ENCODE measurements at regions of chr20 and their contacts with region 1.

Region 1: DNA sequence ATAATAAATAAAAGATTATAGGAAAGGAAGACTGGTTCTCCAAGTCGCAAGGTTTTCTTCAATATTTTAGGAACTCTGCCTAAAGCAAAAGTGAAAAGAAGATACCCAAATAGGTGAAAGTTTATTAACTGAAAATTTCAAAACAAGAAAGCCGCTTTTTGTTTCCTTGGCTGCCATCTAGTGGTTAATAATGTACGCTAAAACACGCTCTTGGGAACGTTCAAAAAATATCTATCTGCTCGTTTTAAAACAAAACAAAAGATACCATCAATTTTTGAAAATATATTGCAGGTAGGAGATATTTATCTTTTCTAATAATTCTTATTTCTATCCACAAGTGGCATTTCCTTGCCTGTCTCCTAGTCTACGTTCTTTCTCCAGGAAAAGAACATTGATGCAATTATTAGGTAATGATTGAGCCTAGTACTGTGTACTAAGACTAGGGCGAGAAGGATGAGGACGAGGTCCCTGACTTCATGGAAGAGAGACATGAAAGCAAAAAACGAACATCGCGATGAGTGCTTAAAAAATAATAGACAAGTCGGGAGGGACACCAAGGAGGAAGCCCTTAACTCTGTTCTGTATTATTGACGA is 97.2 kb downstream of the SPTLC3 start:
- DNase-seq: no peak
- ATAC-seq: no peak

Region 2: GRCh38 chr20:12838261-12838866 is 267.6 kb before region 1 on chr20:
- intact Hi-C with region 1: no loop called
- DNase-seq: no peak
- ATAC-seq: no peak

Region 3: DNA sequence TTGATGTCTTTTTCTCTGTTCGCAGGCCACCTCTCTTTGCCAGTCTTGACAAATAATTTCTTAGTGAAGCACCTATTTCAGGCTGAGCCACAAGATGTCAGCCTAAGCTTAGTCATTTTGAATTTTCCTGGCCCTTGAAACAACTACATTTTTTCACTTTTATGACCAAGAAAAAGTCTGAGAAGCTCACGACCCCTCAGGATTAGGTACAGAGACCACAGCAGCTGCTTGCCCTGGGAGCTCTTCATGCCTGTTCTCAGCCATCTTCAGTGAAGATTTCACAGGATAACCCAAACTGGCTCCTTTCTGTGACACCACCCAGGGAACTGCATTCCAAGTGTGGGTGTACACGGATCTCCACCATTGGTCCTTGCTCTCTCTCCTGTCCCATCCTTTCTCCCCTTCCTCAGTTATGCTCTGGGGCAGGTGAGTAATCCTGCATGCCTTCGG is 135.6 kb before region 1 on chr20:
- intact Hi-C with region 1: loop called (anchors 2 kb)
- DNase-seq: no peak
- ATAC-seq: peak; percentile 31

Region 4: DNA sequence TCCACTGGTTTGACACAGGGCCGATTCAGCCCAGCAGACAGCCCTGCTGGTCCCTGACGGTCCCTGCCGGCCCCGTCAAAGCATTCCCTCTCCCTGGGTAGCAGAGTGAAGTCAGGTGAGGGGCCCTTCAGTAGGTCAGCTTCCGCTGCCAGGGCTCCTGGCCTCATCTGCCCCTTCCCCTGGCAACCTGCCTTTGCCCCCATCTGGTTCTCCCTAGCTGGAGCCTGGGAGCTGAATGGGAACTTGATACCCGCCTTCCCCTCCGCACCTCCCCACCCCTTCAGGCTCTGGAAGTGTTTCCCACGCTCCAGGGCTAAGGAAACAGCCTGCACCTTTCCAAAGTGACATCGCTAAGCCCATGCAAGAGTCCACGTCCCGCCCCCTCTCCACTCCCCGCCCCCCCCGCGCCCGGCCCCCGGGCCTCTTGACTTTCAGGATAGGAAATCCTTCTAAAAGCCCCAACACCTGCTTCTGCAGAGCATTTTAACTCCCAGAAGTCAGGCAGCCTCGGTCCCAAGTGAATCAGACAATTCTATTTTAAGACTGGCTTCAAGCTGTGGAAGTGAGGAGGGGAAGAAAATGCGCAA is 168.4 kb after region 1 on chr20:
- intact Hi-C with region 1: no loop called
- DNase-seq: no peak
- ATAC-seq: no peak

Measured in left ventricle myocardium superior (tissue), 1 donor.